Ascending aorta (tissue), 2 donors: ENCODE measurements at regions of chr11 and their contacts with region 1.

Region 1: DNA sequence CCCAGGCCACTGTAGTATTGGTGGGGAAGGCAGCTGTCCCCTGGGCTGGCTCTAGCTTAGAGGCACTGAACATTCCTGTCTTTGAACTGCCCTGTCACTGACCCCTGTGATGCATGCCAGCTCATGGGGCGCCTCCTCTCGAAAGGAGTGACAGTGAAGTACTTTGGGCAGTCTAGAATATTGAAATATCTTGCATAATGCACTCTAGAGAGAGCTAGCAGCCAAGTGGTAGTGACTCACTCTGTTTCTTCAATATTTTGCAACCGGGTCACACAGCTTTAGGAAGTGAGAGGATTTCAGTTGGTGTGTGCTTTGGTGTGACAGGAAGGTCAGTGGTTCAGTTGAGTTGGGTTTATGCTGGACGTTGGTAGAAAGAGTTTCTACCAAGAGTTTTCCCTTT is 35.5 kb upstream of the ST14 start:
- DNase-seq: peak; percentile 67 to 89
- H3K4me3 ChIP-seq: no peak overlapping the region
- H3K27ac ChIP-seq: peak overlapping the region; percentile 60 to 74
- H3K4me1 ChIP-seq: peaks cover 0 to 21% of the 10 kb centered on the region in 2 donors
- H3K27me3 ChIP-seq: no peaks in the 10 kb centered on the region
- CTCF ChIP-seq: no peak

Region 2: GRCh38 chr11:130166457-130166784 is 42.3 kb after region 1 on chr11:
- intact Hi-C with region 1: no loop called
- DNase-seq: no peak
- H3K4me3 ChIP-seq: no peak overlapping the region
- H3K27ac ChIP-seq: no peak overlapping the region
- H3K4me1 ChIP-seq: no peaks in the 10 kb centered on the region
- H3K27me3 ChIP-seq: no peaks in the 10 kb centered on the region
- CTCF ChIP-seq: no peak

Region 3: GRCh38 chr11:130189492-130190210 is 65.6 kb after region 1 on chr11:
- intact Hi-C with region 1: no loop called
- DNase-seq: no peak
- H3K4me3 ChIP-seq: no peak overlapping the region
- H3K27ac ChIP-seq: no peak overlapping the region
- H3K4me1 ChIP-seq: no peaks in the 10 kb centered on the region
- H3K27me3 ChIP-seq: no peaks in the 10 kb centered on the region
- CTCF ChIP-seq: no peak

Region 4: GRCh38 chr11:130202009-130202817 is 78.1 kb after region 1 on chr11:
- intact Hi-C with region 1: no loop called
- DNase-seq: no peak
- H3K4me3 ChIP-seq: no peak overlapping the region
- H3K27ac ChIP-seq: no peak overlapping the region
- H3K4me1 ChIP-seq: no peaks in the 10 kb centered on the region
- H3K27me3 ChIP-seq: no peaks in the 10 kb centered on the region
- CTCF ChIP-seq: no peak

Region 5: GRCh38 chr11:130418756-130419155 is 294.7 kb after region 1 on chr11:
- intact Hi-C with region 1: loop called (anchors 5 kb)
- DNase-seq: no peak
- H3K4me3 ChIP-seq: no peak overlapping the region
- H3K27ac ChIP-seq: peak overlapping the region; percentile 15 to 52
- H3K4me1 ChIP-seq: peaks cover 8 to 10% of the 10 kb centered on the region in 2 donors
- H3K27me3 ChIP-seq: no peaks in the 10 kb centered on the region
- CTCF ChIP-seq: no peak

Region 6: DNA sequence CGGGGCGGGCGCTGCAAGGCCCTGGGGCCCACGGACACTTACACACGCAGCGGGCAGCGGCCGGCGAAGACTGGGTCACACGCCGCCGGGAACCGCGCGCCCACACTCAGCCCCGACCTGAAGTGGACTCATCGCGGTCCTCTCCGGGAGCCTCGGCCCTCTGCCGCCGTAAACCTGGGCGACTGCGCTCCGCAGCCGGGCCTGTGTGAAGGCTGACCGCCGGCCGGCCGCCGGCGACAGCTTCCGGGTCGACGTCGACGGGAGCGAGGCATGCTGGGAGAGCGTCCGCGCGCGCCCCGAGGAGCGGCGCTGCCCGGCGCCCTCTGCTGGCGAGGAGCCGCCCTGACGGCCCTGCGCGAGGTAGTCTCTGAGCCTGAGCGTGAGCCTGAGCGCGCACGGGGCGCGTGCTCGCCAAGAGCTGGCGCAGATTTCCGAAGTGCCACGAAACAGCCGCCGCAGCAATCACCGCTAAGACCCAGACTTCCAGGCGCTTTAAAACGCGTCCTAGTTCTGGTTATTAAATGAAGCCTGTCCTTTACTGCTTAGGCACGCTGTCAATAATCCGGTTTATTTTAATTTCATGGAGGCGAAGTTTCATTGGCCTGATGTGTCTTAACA is 792.3 kb after region 1 on chr11 and contains the start of gene SNX19:
- intact Hi-C with region 1: loop called (anchors 10 kb)
- DNase-seq: peak; percentile 52 to 94
- H3K4me3 ChIP-seq: peak within 1 kb of the TSS; percentile 72 to 99
- H3K27ac ChIP-seq: peak within 1 kb of the TSS; percentile 86 to 97
- H3K4me1 ChIP-seq: peaks cover 6 to 11% of the 10 kb centered on the region in 2 donors
- H3K27me3 ChIP-seq: no peaks in the 10 kb centered on the region
- CTCF ChIP-seq: peak; percentile 88 to 96 (median 93)
- total RNA-seq, gene SNX19: 137 TPM